ENCODE measurements at regions of chr13 and their contacts with region 1.

Region 1: DNA sequence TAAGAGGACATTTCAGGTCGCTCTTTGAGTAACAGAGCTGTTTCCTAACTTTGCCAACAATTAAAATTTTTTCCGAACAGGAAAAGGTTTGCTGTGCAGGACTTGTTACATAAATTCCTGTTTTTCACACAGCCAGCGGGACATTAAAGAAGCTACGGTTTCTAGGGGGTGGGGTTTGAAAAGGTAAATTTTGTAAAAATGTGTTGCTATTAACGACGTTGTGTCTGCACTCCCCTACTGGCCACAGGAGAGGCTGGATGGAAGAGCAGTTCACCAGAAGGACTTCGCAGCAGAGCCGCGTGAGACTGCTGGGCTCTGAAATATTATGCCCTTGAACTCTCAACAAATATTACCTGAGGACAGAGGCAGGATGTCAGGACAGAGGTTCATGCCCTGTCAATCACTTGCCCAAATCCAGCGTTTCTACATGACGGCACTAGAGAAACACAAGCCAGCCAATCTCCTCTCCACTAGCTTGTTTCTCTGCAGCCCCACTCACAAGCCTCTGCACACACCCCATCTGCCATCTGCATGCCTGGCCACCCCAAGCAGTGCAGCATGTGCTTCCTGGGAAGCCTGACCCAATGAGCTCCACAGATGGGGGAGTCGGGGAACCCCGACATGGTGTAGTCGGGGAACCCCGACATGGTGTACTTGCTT is 102.0 kb downstream of the FOXO1 start:
- DNase-seq: peak in 1 of 9 donors; percentile 45
- ATAC-seq: peak; percentile 65
- H3K4me3 ChIP-seq: no peak overlapping the region
- H3K4me3 Mint-ChIP-seq: peak overlapping the region in 9 of 10 donors; percentile 51 to 81 (median 72)
- H3K27ac ChIP-seq: peak overlapping the region; percentile 46
- H3K27ac Mint-ChIP-seq: peak overlapping the region; percentile 27 to 96 (median 81)
- H3K4me1 ChIP-seq: peaks cover 36 to 61% of the 10 kb centered on the region in 2 donors
- H3K4me1 Mint-ChIP-seq: peaks cover 61 to 96% (median 92%) of the 10 kb centered on the region in 7 donors
- H3K27me3 ChIP-seq: no peaks in the 10 kb centered on the region
- H3K27me3 Mint-ChIP-seq: no peaks in the 10 kb centered on the region

Region 2: GRCh38 chr13:38954291-38954690 is 1610.2 kb before region 1 on chr13:
- CTCF ChIA-PET with region 1: no interaction called
- POLR2A ChIA-PET with region 1: no interaction called
- intact Hi-C with region 1: no loop called
- DNase-seq: no peak
- ATAC-seq: no peak
- H3K4me3 ChIP-seq: no peak overlapping the region
- H3K4me3 Mint-ChIP-seq: no peak overlapping the region
- H3K27ac ChIP-seq: no peak overlapping the region
- H3K27ac Mint-ChIP-seq: no peak overlapping the region
- H3K4me1 ChIP-seq: no peaks in the 10 kb centered on the region
- H3K4me1 Mint-ChIP-seq: no peaks in the 10 kb centered on the region
- H3K27me3 ChIP-seq: no peaks in the 10 kb centered on the region
- H3K27me3 Mint-ChIP-seq: peaks cover 0 to 33% (median 19%) of the 10 kb centered on the region in 5 donors

Region 3: DNA sequence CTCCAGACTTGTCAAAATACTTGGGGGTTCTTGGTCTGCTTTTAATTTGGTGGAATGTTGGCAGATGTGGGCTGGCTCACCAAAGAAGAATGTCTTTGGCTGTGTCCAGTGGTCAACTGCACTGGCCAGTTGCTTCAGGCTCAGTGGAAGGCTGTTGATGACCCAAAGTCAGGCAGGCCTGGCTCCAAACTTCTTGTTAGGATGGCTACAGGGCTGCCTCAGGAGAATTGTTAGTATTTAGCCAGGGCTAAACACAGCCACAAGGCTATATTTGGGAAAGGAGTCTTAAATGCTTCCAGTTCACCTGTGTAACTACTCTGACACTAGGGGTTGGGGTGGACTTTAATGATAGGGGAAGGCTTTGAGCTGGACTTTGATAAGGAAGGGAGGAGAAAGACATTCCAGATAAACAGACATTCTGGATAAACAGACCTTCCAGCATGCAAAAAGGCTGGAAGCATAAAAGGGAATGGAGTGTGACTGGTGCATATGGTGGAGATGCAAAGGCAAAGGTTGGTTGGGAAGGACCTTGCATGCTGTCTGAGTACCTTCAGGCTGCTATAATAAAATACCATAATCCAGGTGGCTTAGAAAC is 14.9 kb before region 1 on chr13:
- CTCF ChIA-PET with region 1: interaction called, 5 read pairs
- POLR2A ChIA-PET with region 1: no interaction called
- intact Hi-C with region 1: loop called in 1 of 2 experiments (anchors 2 kb)
- DNase-seq: no peak
- ATAC-seq: no peak
- H3K4me3 ChIP-seq: no peak overlapping the region
- H3K4me3 Mint-ChIP-seq: no peak overlapping the region
- H3K27ac ChIP-seq: peak overlapping the region; percentile 4
- H3K27ac Mint-ChIP-seq: peak overlapping the region in 5 of 9 donors; percentile 4 to 77 (median 30)
- H3K4me1 ChIP-seq: peaks cover 0 to 17% of the 10 kb centered on the region in 2 donors
- H3K4me1 Mint-ChIP-seq: peaks cover 22 to 59% (median 46%) of the 10 kb centered on the region in 7 donors
- H3K27me3 ChIP-seq: no peaks in the 10 kb centered on the region
- H3K27me3 Mint-ChIP-seq: no peaks in the 10 kb centered on the region